Caco-2 (cell line): ENCODE measurements at regions of chr22 and their contacts with region 1.

Region 1: DNA sequence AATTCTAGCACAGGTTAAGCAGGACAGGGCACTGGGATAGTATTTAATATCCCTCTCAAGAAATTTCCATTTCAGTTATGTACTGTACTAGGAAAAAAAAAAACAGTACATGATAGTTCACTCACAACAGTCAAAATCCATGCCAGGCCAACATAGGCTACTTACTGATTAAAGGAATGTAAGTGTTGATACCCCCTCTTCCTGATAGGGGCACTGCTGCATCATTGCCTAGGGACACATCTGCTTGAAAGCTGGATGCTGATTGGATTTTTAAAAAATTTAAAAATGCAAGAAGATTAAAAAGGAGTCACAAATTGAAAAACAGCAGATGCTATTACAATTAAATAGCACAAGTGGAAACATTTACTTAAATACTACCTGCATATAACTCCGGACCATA is 43.4 kb downstream of the APOL5 start:
- DNase-seq: peak in 1 of 2 experiments; percentile 14
- H3K4me3 ChIP-seq: no peak overlapping the region
- H3K4me3 Mint-ChIP-seq: no peak overlapping the region
- H3K27ac Mint-ChIP-seq: no peak overlapping the region
- H3K4me1 ChIP-seq: no peaks in the 10 kb centered on the region
- H3K4me1 Mint-ChIP-seq: peaks cover 6% of the 10 kb centered on the region
- H3K27me3 ChIP-seq: no peaks in the 10 kb centered on the region
- H3K27me3 Mint-ChIP-seq: no peaks in the 10 kb centered on the region
- CTCF ChIP-seq: peak in 1 of 2 experiments; percentile 49

Region 2: DNA sequence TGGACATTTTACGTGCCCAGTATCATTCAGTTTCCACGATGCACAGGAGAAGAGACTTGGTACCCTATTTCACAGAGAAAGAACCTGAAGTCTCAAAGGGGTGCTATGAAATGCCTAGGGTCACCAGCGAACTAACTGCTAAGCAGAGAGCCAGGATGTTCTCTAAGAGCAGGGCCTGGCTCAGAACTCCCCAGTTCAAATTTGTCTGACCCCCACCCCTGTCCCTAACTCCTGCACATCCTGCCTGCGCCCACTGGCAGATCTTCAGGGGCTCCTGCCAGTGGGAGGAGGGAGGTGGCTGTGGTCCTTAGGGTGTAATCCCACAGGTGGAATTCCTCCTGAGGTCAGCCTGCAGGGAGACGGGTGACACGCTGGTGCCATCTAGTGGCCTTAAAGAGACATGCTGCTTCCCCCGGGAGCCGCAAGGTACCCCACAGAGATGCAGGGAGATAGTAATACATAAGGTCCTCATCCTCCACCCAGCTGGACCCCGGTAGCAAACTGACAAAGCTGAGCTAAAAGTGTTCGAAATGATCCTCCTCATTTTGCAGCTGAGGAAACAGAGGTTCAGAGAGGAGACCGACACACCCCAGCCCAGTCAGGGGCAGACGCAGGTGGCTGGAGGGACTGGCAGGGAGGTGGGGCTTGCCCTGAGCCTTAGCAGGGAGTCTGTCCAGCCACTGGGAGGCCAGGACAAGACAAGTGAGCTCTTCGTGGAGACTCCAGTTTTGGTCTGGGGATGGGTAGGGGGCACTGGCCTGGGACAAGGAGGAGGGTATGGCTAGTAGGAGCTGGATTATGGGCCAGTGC is 178.0 kb before region 1 on chr22:
- CTCF ChIA-PET with region 1: no interaction called
- POLR2A ChIA-PET with region 1: no interaction called
- intact Hi-C with region 1: no loop called
- DNase-seq: peak; percentile 71 to 77
- H3K4me3 ChIP-seq: no peak overlapping the region
- H3K4me3 Mint-ChIP-seq: no peak overlapping the region
- H3K27ac Mint-ChIP-seq: no peak overlapping the region
- H3K4me1 ChIP-seq: no peaks in the 10 kb centered on the region
- H3K4me1 Mint-ChIP-seq: peaks cover 4% of the 10 kb centered on the region
- H3K27me3 ChIP-seq: no peaks in the 10 kb centered on the region
- H3K27me3 Mint-ChIP-seq: no peaks in the 10 kb centered on the region
- CTCF ChIP-seq: peak; percentile 91 to 92

Region 3: DNA sequence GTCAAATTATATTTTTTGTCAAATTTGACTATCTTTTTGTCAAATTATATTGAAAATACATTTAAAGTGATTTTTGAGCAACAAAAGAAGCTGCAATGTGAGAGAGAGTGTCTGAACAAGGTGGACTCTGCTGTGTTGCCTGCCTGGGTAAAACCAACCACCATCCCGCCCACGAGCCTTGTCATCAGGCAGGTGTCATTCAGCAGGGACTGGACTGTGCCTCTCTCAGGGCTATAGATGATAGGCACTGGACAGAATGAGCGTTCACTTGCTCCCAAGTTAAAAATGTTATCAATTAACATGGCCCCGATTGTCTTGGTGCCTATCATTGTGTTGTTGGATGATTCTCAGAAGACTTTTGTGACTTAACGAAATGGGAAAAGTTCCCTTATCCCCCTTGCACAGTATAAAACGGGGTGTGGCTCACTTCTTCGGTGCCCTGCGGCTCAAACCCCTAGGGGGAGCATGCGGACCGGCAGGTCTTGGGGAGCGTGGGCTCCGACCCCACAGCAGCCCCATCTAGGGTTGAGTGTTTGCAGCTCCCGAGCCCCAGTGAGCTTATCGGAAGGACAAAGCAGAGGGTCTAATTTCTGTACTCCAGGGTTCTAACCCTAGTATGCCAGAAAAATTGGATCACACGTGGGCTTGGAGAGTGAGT is 41.7 kb before region 1 on chr22:
- CTCF ChIA-PET with region 1: no interaction called
- POLR2A ChIA-PET with region 1: no interaction called
- intact Hi-C with region 1: no loop called
- DNase-seq: no peak
- H3K4me3 ChIP-seq: no peak overlapping the region
- H3K4me3 Mint-ChIP-seq: no peak overlapping the region
- H3K27ac Mint-ChIP-seq: no peak overlapping the region
- H3K4me1 ChIP-seq: no peaks in the 10 kb centered on the region
- H3K4me1 Mint-ChIP-seq: no peaks in the 10 kb centered on the region
- H3K27me3 ChIP-seq: no peaks in the 10 kb centered on the region
- H3K27me3 Mint-ChIP-seq: no peaks in the 10 kb centered on the region
- CTCF ChIP-seq: peak in 1 of 2 experiments; percentile 23

Region 4: DNA sequence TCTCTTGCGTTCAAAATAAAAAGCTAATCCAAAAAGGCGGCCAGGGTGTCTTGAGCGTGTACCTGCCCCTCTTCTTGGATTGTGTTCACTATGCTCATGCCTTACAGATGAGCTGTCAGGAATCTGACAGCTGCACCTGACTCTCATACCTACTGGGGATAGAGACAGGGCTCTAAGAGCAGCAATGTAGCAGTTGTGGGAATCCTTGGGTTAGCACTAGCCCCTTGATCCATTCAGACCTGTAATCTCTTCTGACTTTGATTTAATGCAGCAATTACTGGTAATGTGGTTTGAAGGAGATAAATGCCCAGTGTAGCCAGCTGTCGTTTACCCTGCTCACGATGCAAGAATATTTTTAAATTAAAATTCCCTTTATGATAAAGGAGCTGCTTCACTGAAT is 102.4 kb after region 1 on chr22:
- CTCF ChIA-PET with region 1: no interaction called
- POLR2A ChIA-PET with region 1: no interaction called
- intact Hi-C with region 1: no loop called
- DNase-seq: no peak
- H3K4me3 ChIP-seq: no peak overlapping the region
- H3K4me3 Mint-ChIP-seq: no peak overlapping the region
- H3K27ac Mint-ChIP-seq: no peak overlapping the region
- H3K4me1 ChIP-seq: peaks cover 10% of the 10 kb centered on the region
- H3K4me1 Mint-ChIP-seq: peaks cover 13% of the 10 kb centered on the region
- H3K27me3 ChIP-seq: no peaks in the 10 kb centered on the region
- H3K27me3 Mint-ChIP-seq: no peaks in the 10 kb centered on the region
- CTCF ChIP-seq: no peak

Region 5: DNA sequence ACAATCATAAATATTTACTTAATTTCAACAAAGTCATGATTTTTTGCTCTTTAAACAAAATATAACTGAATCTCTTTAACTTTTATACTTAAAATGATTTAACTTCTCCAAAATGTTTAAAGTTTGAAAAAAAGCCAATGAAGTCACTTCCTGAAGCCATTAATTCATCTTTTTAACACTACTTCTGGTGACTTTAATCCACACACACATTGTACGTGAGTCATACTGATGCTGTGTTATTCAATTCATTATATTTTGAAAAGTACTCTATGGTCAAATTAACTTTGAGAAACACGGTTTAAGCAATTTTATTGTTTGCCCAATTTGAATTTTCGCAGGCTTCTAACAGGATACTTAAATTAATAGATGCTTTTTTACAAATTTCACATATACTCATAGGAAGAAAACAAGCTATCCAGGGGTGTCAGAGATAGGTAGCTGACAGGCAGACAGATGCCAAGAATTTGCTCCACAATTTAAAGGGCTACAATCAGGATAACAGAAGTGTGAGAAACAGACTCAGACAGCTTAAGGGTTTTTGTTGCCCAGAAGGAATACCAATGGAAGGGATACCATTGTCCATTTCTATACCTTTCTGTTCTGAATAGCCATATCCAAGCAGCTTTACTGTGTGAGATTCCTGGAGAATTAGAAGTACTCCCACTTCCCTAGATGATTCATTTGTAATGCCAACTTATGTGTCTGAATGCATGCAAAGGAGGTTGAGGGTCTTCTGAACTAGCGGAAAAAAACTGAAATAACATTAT is 149.1 kb after region 1 on chr22:
- CTCF ChIA-PET with region 1: no interaction called
- POLR2A ChIA-PET with region 1: no interaction called
- intact Hi-C with region 1: no loop called
- DNase-seq: no peak
- H3K4me3 ChIP-seq: no peak overlapping the region
- H3K4me3 Mint-ChIP-seq: no peak overlapping the region
- H3K27ac Mint-ChIP-seq: no peak overlapping the region
- H3K4me1 ChIP-seq: peaks cover 59% of the 10 kb centered on the region
- H3K4me1 Mint-ChIP-seq: peaks cover 43% of the 10 kb centered on the region
- H3K27me3 ChIP-seq: no peaks in the 10 kb centered on the region
- H3K27me3 Mint-ChIP-seq: no peaks in the 10 kb centered on the region
- CTCF ChIP-seq: no peak

Region 6: DNA sequence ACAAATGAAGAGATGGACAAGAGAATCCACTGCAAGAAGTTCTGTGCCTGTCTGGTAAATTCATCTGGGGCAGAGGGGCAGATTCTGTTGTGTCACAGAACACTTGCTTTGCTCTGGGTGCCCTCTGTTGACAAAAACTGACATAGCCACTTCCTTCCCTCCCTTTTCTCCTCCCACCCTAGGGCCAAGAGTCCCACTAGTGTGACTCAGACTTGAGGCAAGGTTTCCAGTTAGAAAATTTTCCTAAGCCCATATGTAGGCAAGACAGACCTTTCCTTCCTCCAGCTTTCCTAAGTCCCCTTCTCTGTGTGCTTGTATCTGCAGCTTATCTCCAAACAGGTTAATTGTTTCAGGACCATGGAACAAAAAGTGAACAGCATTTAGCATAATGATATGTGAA is 160.7 kb after region 1 on chr22:
- CTCF ChIA-PET with region 1: interaction called, 4 read pairs
- POLR2A ChIA-PET with region 1: no interaction called
- intact Hi-C with region 1: loop called (anchors 2 kb)
- DNase-seq: peak; percentile 76 to 77
- H3K4me3 ChIP-seq: no peak overlapping the region
- H3K4me3 Mint-ChIP-seq: no peak overlapping the region
- H3K27ac Mint-ChIP-seq: no peak overlapping the region
- H3K4me1 ChIP-seq: peaks cover 24% of the 10 kb centered on the region
- H3K4me1 Mint-ChIP-seq: peaks cover 33% of the 10 kb centered on the region
- H3K27me3 ChIP-seq: no peaks in the 10 kb centered on the region
- H3K27me3 Mint-ChIP-seq: no peaks in the 10 kb centered on the region
- CTCF ChIP-seq: peak; percentile 49 to 69